ENCODE measurements at regions of chr17 and their contacts with region 1.

Region 1: DNA sequence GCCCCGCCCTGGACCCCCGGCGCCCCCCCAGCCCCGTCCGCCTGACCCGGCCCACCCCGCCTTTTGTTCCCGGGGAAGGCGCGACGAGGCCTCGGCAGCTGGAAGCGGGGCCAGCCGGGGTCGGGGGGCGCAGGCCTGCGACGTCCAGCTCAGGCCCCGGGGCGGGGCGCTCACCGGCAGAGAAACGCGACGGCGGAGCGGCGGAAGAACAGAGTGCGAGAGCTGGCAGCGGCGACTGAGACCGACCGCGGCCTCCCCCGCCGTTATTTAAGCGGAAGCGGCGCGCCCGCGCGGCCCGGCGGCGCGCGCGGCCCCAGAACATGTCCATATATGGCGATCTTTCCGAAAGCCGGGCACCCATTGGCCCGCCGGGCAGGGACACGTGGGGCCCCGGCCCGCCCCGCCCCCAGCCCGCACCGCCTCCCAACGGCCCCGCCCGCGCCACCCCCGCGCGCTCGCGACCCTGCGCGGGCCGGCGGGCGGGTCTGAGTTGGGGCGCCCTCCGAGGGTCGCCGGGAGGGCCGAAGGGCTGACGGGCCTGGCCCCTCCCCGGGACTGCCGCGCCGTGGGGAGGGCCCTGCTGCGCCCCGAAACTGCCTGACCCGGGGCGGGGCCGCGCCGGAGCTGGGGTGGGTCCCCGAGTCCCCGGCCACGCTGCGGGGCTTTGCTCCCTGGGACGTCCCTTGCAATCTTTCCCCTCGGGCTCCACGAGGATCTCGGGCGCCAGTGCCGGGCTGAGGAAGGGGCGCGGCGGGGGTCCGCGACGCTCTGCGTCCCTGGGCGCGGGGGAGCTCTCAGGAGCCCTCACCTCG is at the start of gene ACTG1:
- DNase-seq: peak; percentile 81 to 91 (median 90)
- H3K4me3 ChIP-seq: peak within 1 kb of the TSS; percentile 75 to 94 (median 83)
- H3K4me3 Mint-ChIP-seq: peak within 1 kb of the TSS; percentile 95 to 96
- H3K27ac ChIP-seq: peak within 1 kb of the TSS; percentile 84 to 89
- H3K27ac Mint-ChIP-seq: peak within 1 kb of the TSS; percentile 83 to 95 (median 90)
- H3K4me1 ChIP-seq: peaks cover 65 to 84% of the 10 kb centered on the region in 2 donors
- H3K4me1 Mint-ChIP-seq: peaks cover 64% of the 10 kb centered on the region
- H3K27me3 ChIP-seq: no peaks in the 10 kb centered on the region
- H3K27me3 Mint-ChIP-seq: peaks cover 0 to under 1% (median under 1%) of the 10 kb centered on the region in 3 donors
- CTCF ChIP-seq: no peak
- polyA plus RNA-seq, gene ACTG1: 1,133 to 3,195 (median 1,620) TPM

Region 2: GRCh38 chr17:81401723-81402529 is 110.8 kb before region 1 on chr17:
- intact Hi-C with region 1: loop called (anchors 2 to 5 kb)
- DNase-seq: peak in 2 of 3 donors; percentile 47 to 64
- H3K4me3 ChIP-seq: peak overlapping the region in 1 of 3 experiments; percentile 93
- H3K4me3 Mint-ChIP-seq: peak overlapping the region; percentile 41 to 42
- H3K27ac ChIP-seq: no peak overlapping the region
- H3K27ac Mint-ChIP-seq: peak overlapping the region in 4 of 7 donors; percentile 24 to 86 (median 56)
- H3K4me1 ChIP-seq: peaks cover 42 to 56% of the 10 kb centered on the region in 2 donors
- H3K4me1 Mint-ChIP-seq: peaks cover 46% of the 10 kb centered on the region
- H3K27me3 ChIP-seq: no peaks in the 10 kb centered on the region
- H3K27me3 Mint-ChIP-seq: peaks cover 0 to 9% (median 2%) of the 10 kb centered on the region in 3 donors
- CTCF ChIP-seq: no peak

Region 3: GRCh38 chr17:81553018-81553615 is 40.4 kb after region 1 on chr17:
- intact Hi-C with region 1: loop called in 1 of 2 experiments (anchors 5 kb)
- DNase-seq: peak; percentile 62 to 64 (median 63)
- H3K4me3 ChIP-seq: peak overlapping the region; percentile 79 to 93 (median 92)
- H3K4me3 Mint-ChIP-seq: peak overlapping the region; percentile 87 to 91
- H3K27ac ChIP-seq: peak overlapping the region; percentile 71 to 83
- H3K27ac Mint-ChIP-seq: peak overlapping the region; percentile 86 to 94 (median 93)
- H3K4me1 ChIP-seq: peaks cover 34 to 56% of the 10 kb centered on the region in 2 donors
- H3K4me1 Mint-ChIP-seq: peaks cover 47% of the 10 kb centered on the region
- H3K27me3 ChIP-seq: no peaks in the 10 kb centered on the region
- H3K27me3 Mint-ChIP-seq: peaks cover 0 to 1% (median 0%) of the 10 kb centered on the region in 3 donors
- CTCF ChIP-seq: no peak

Region 4: DNA sequence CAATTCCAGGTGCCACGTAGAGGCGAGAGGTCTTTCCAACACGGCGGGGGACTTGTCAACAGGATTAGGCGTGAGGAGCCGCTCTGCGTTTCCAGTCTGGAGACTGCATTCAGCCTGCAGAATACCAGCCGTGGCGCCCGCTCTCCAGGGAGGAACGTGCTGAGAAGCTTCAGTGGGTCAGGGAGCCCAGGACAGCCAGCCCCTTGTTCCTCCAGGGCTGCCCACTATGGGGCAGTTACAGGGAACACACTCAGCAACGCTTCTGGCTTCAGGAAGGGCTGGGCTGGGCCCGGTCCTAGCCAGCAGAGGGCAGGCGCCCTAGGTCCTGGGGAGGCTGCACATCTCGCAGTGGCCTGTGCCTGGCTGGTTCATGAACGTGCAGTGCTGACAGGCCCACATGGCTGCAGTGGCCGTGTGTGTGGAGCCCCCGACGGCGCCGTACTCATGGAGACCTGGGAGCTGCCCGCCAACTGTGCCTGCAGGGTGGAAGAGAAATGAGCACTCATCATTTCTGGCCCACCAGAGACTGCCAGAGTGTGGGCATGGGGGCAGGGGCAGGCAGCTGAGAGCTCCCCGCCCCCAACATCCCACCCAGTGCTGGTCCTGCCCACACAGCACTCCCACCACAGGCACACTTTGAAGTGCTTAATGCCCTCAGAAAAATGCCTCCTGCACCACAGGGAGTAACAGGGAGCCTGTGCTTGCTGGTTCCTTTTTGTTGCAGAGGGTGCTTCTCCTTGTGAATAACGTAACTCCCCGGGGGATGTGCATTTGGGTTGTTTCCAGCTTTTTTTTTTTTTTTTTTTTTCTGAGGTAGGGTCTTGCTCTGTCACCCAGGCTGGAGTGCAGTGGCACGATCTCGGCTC is 46.4 kb after region 1 on chr17:
- intact Hi-C with region 1: loop called (anchors 2 to 5 kb)
- DNase-seq: peak; percentile 53 to 59 (median 57)
- H3K4me3 ChIP-seq: peak overlapping the region in 2 of 3 experiments; percentile 16 to 65
- H3K4me3 Mint-ChIP-seq: peak overlapping the region; percentile 12 to 51
- H3K27ac ChIP-seq: peak overlapping the region; percentile 80 to 94
- H3K27ac Mint-ChIP-seq: peak overlapping the region; percentile 57 to 99 (median 97)
- H3K4me1 ChIP-seq: peaks cover 68 to 87% of the 10 kb centered on the region in 2 donors
- H3K4me1 Mint-ChIP-seq: peaks cover 79% of the 10 kb centered on the region
- H3K27me3 ChIP-seq: no peaks in the 10 kb centered on the region
- H3K27me3 Mint-ChIP-seq: no peaks in the 10 kb centered on the region
- CTCF ChIP-seq: peak; percentile 77

Measured in CD14-positive monocyte (primary cell).